T-cell (primary cell): ENCODE measurements at regions of chr4 and their contacts with region 1.

Region 1: GRCh38 chr4:112664611-112665010 is 27.7 kb downstream of the LARP7 start:
- DNase-seq: no peak
- ATAC-seq: no peak
- H3K4me3 ChIP-seq: no peak overlapping the region
- H3K4me3 Mint-ChIP-seq: no peak overlapping the region
- H3K27ac ChIP-seq: no peak overlapping the region
- H3K27ac Mint-ChIP-seq: no peak overlapping the region
- H3K4me1 ChIP-seq: no peaks in the 10 kb centered on the region
- H3K4me1 Mint-ChIP-seq: no peaks in the 10 kb centered on the region
- H3K27me3 ChIP-seq: no peaks in the 10 kb centered on the region
- H3K27me3 Mint-ChIP-seq: no peaks in the 10 kb centered on the region

Region 2: GRCh38 chr4:112075129-112075753 is 589.4 kb before region 1 on chr4:
- CTCF ChIA-PET with region 1: no interaction called
- POLR2A ChIA-PET with region 1: interaction called in 1 of 2 experiments, 13 read pairs
- DNase-seq: peak in 11 of 35 experiments; percentile 2 to 60 (median 7)
- ATAC-seq: peak in 3 of 4 experiments; percentile 23 to 53 (median 48)
- H3K4me3 ChIP-seq: no peak overlapping the region
- H3K4me3 Mint-ChIP-seq: no peak overlapping the region
- H3K27ac ChIP-seq: no peak overlapping the region
- H3K27ac Mint-ChIP-seq: no peak overlapping the region
- H3K4me1 ChIP-seq: no peaks in the 10 kb centered on the region
- H3K4me1 Mint-ChIP-seq: no peaks in the 10 kb centered on the region
- H3K27me3 ChIP-seq: peaks cover 0 to 2% of the 10 kb centered on the region in 2 experiments
- H3K27me3 Mint-ChIP-seq: peaks cover 0 to 4% of the 10 kb centered on the region in 2 donors